ENCODE measurements at regions of chr16 and their contacts with region 1.

Region 1: GRCh38 chr16:79276501-79276900 is 324.0 kb downstream of the MAF start:
- DNase-seq: no peak
- ATAC-seq: no peak
- H3K4me3 ChIP-seq: no peak overlapping the region
- H3K27ac ChIP-seq: no peak overlapping the region
- H3K4me1 ChIP-seq: no peaks in the 10 kb centered on the region
- H3K27me3 ChIP-seq: no peaks in the 10 kb centered on the region
- CTCF ChIP-seq: no peak

Region 2: GRCh38 chr16:78348886-78349285 is 927.6 kb before region 1 on chr16:
- CTCF ChIA-PET with region 1: no interaction called
- POLR2A ChIA-PET with region 1: interaction called, 21 read pairs
- in situ Hi-C with region 1: no loop called
- intact Hi-C with region 1: no loop called
- DNase-seq: no peak
- ATAC-seq: no peak
- H3K4me3 ChIP-seq: no peak overlapping the region
- H3K27ac ChIP-seq: no peak overlapping the region
- H3K4me1 ChIP-seq: no peaks in the 10 kb centered on the region
- H3K27me3 ChIP-seq: no peaks in the 10 kb centered on the region
- CTCF ChIP-seq: no peak

Measured in Panc1 (cell line).